AG04450 (cell line): ENCODE measurements at regions of chr2 and their contacts with region 1.

Region 1: DNA sequence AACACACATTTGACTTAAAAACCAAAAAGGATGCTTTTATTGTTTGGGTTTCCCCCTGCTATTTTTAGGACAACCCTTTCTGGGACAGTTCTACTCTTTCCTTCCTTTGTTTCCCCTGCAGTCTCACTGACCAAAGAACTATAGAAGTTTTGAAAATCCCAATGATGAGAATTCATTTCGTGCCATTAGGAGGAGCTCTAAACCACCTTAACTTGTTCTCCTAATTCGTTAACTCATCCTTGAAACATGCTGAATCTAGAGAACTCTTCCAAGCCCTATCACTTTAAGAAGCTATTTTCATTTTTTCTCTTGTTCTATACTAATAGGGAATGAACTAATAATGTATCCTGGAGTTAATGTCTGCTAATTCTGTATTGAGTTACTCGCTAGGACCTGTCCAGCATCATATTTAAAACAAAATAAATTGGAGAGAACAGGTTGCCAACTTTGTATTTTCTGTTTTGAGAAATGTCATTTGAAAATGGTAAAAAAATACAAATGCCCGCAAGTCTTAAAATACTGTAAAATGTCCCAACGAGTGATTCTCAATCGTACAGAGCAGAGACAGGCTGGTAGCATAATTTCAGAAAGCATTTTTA is 62.9 kb downstream of the AFTPH start:
- DNase-seq: peak; percentile 11
- H3K4me3 ChIP-seq: no peak overlapping the region
- H3K27ac ChIP-seq: no peak overlapping the region
- H3K27me3 ChIP-seq: no peaks in the 10 kb centered on the region
- CTCF ChIP-seq: peak; percentile 70

Region 2: GRCh38 chr2:64523666-64524603 is 63.0 kb before region 1 on chr2 and contains the start of gene AFTPH:
- CTCF ChIA-PET with region 1: interaction called, 11 read pairs
- POLR2A ChIA-PET with region 1: no interaction called
- DNase-seq: peak; percentile 97
- H3K4me3 ChIP-seq: peak within 1 kb of the TSS; percentile 91
- H3K27ac ChIP-seq: peak within 1 kb of the TSS; percentile 81
- H3K27me3 ChIP-seq: peaks cover 12% of the 10 kb centered on the region
- CTCF ChIP-seq: no peak
- polyA plus RNA-seq, gene AFTPH: 16.8 and 22.0 TPM in 2 replicates

Region 3: GRCh38 chr2:64568836-64569235 is 18.1 kb before region 1 on chr2:
- CTCF ChIA-PET with region 1: interaction called, 14 read pairs
- POLR2A ChIA-PET with region 1: no interaction called
- DNase-seq: no peak
- H3K4me3 ChIP-seq: no peak overlapping the region
- H3K27ac ChIP-seq: no peak overlapping the region
- H3K27me3 ChIP-seq: no peaks in the 10 kb centered on the region
- CTCF ChIP-seq: no peak

Region 4: GRCh38 chr2:64606479-64607363 is 19.7 kb after region 1 on chr2:
- CTCF ChIA-PET with region 1: interaction called, 13 read pairs
- POLR2A ChIA-PET with region 1: no interaction called
- DNase-seq: no peak
- H3K4me3 ChIP-seq: no peak overlapping the region
- H3K27ac ChIP-seq: no peak overlapping the region
- H3K27me3 ChIP-seq: peaks cover 50% of the 10 kb centered on the region
- CTCF ChIP-seq: no peak

Region 5: DNA sequence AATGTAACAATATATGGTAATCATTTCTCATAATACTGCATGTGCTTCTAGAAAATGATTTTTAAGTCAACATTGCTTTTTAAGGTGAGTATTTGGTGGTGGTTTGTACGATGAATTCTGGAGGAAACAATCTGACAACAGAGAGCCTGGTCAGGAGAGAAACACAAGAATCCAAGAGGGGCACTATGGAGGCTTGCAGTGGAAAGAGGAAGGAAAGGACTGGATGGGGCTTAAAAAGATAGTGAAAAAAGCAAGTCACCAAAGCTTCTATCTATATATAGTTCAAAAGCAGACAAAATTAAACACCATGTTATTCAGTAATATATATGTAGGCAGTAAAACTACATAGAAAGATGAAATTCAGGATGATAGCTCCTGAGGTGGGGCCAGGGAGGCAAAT is 176.1 kb after region 1 on chr2:
- CTCF ChIA-PET with region 1: no interaction called
- POLR2A ChIA-PET with region 1: no interaction called
- DNase-seq: no peak
- H3K4me3 ChIP-seq: no peak overlapping the region
- H3K27ac ChIP-seq: no peak overlapping the region
- H3K27me3 ChIP-seq: no peaks in the 10 kb centered on the region
- CTCF ChIP-seq: no peak

Region 6: DNA sequence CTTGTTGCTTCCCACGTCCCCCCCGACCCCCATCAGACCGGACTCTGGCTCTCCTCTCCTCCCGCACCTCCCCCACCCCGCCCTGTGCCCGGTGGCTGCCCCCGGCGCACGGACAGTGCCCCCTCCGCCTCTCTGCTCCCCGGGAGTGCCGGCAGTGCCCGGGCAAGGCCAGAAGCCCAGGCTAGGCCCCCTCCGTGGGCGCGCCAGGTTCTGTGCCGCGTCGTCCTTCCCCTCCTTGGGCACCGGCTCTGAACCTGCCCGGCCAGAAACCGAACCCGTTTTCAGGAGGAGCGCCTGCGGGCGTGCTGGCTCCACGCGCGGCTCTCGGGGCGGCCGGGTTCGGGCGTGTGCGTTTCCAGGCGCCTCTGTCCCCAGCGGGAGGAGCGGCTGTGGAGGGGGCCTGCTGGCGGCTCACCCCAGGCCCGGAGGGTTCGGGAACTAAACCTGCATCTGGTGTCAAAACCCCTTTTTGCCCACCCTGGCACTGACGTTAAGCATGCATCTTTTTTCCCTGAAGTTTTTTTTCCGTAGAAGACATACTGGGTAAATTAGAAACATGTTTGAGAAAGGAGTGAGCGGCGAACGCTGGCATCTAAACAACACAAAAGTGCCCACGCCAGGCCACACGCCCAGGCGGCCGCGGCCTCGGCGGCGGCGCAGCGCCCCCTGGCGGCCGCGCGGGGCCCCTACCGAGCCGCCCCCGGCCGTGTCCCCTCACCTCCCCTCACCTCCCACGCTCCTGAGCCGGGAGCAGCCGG is 278.3 kb after region 1 on chr2:
- CTCF ChIA-PET with region 1: interaction called, 42 read pairs
- POLR2A ChIA-PET with region 1: no interaction called
- DNase-seq: no peak
- H3K4me3 ChIP-seq: peak overlapping the region; percentile 57
- H3K27ac ChIP-seq: no peak overlapping the region
- H3K27me3 ChIP-seq: peaks cover 38% of the 10 kb centered on the region
- CTCF ChIP-seq: peak; percentile 53

Region 7: GRCh38 chr2:64873472-64873924 is 286.5 kb after region 1 on chr2:
- CTCF ChIA-PET with region 1: interaction called, 45 read pairs
- POLR2A ChIA-PET with region 1: no interaction called
- DNase-seq: no peak
- H3K4me3 ChIP-seq: 0 out of 2 replicates have a peak overlapping the region, but pooled peaks have one; percentile 10
- H3K27ac ChIP-seq: no peak overlapping the region
- H3K27me3 ChIP-seq: peaks cover 36% of the 10 kb centered on the region
- CTCF ChIP-seq: peak; percentile 92

Region 8: GRCh38 chr2:64904413-64905329 is 317.7 kb after region 1 on chr2:
- CTCF ChIA-PET with region 1: interaction called, 14 read pairs
- POLR2A ChIA-PET with region 1: no interaction called
- DNase-seq: no peak
- H3K4me3 ChIP-seq: no peak overlapping the region
- H3K27ac ChIP-seq: no peak overlapping the region
- H3K27me3 ChIP-seq: peaks cover 44% of the 10 kb centered on the region
- CTCF ChIP-seq: no peak